ENCODE measurements at regions of chr2 and their contacts with region 1.

Region 1: GRCh38 chr2:12452211-12452610 is 264.5 kb upstream of the TRIB2 start:
- DNase-seq: no peak
- ATAC-seq: no peak
- H3K4me3 ChIP-seq: no peak overlapping the region
- H3K27ac ChIP-seq: no peak overlapping the region
- H3K4me1 ChIP-seq: peaks cover 0 to 3% of the 10 kb centered on the region in 2 experiments; a peak in 1 of 4 replicates
- H3K27me3 ChIP-seq: no peaks in the 10 kb centered on the region
- CTCF ChIP-seq: no peak
- POLR2A ChIP-seq: no peak
- RAD21 ChIP-seq: no peak

Region 2: DNA sequence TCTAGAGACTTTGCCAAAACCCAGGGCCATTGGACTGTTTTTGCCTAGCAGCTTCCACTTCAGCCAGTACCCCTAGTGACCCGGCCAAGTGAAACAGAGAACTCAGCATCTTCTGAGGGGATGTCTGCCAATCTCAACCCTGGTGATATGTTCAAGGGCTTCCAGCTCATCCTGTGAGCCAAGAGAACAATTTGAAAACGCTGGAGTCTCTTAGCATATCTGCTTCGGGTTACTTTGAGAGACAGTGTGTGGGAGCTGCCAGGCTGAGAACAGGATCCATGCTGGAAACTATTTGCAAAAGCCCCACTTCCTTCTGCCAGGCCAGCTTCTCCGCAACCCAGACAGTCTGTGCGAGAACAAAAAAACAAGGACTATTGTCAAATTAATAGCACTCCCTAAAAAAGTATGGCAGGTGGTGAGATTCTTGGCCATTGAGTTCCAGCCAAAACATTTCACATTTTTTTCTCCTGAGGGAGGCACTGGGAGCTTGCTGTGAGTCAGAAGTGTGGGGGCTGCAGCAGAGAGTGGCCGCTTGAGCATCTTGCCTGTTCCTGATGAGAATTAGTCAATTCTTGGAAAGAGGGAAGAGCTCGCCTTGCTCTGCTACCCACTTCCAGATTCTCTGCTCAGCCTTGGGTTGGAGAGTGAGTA is 131.1 kb before region 1 on chr2:
- CTCF ChIA-PET with region 1: no interaction called
- POLR2A ChIA-PET with region 1: no interaction called
- RAD21 ChIA-PET with region 1: no interaction called
- intact Hi-C with region 1: no loop called
- DNase-seq: no peak
- ATAC-seq: no peak
- H3K4me3 ChIP-seq: no peak overlapping the region
- H3K27ac ChIP-seq: no peak overlapping the region
- H3K4me1 ChIP-seq: peaks cover 0 to 6% of the 10 kb centered on the region in 2 experiments; a peak in 1 of 4 replicates
- H3K27me3 ChIP-seq: no peaks in the 10 kb centered on the region
- CTCF ChIP-seq: no peak
- POLR2A ChIP-seq: no peak
- RAD21 ChIP-seq: no peak

Region 3: GRCh38 chr2:12430407-12431133 is 21.6 kb before region 1 on chr2:
- CTCF ChIA-PET with region 1: no interaction called
- POLR2A ChIA-PET with region 1: no interaction called
- RAD21 ChIA-PET with region 1: no interaction called
- intact Hi-C with region 1: loop called (anchors 2 kb)
- DNase-seq: no peak
- ATAC-seq: no peak
- H3K4me3 ChIP-seq: no peak overlapping the region
- H3K27ac ChIP-seq: no peak overlapping the region
- H3K4me1 ChIP-seq: no peaks in the 10 kb centered on the region
- H3K27me3 ChIP-seq: no peaks in the 10 kb centered on the region
- CTCF ChIP-seq: no peak
- POLR2A ChIP-seq: no peak
- RAD21 ChIP-seq: no peak

Region 4: GRCh38 chr2:12577091-12577490 is 124.9 kb after region 1 on chr2:
- CTCF ChIA-PET with region 1: no interaction called
- POLR2A ChIA-PET with region 1: no interaction called
- RAD21 ChIA-PET with region 1: no interaction called
- intact Hi-C with region 1: no loop called
- DNase-seq: no peak
- ATAC-seq: no peak
- H3K4me3 ChIP-seq: no peak overlapping the region
- H3K27ac ChIP-seq: no peak overlapping the region
- H3K4me1 ChIP-seq: no peaks in the 10 kb centered on the region
- H3K27me3 ChIP-seq: no peaks in the 10 kb centered on the region
- CTCF ChIP-seq: no peak
- POLR2A ChIP-seq: no peak
- RAD21 ChIP-seq: no peak

Region 5: GRCh38 chr2:12702305-12703121 is 250.3 kb after region 1 on chr2:
- CTCF ChIA-PET with region 1: no interaction called
- POLR2A ChIA-PET with region 1: no interaction called
- RAD21 ChIA-PET with region 1: no interaction called
- intact Hi-C with region 1: no loop called
- DNase-seq: no peak
- ATAC-seq: no peak
- H3K4me3 ChIP-seq: no peak overlapping the region
- H3K27ac ChIP-seq: no peak overlapping the region
- H3K4me1 ChIP-seq: 0 out of 4 replicates have a peak, but pooled peaks cover 0 to 3% of the 10 kb centered on the region in 2 experiments
- H3K27me3 ChIP-seq: no peaks in the 10 kb centered on the region
- CTCF ChIP-seq: no peak
- POLR2A ChIP-seq: no peak
- RAD21 ChIP-seq: no peak

Measured in HCT116 (cell line).